B cell (primary cell): ENCODE measurements at regions of chr1 and their contacts with region 1.

Region 1: GRCh38 chr1:180981596-180982387 is 40.9 kb downstream of the STX6 start:
- DNase-seq: peak; percentile 33
- ATAC-seq: peak; percentile 90
- H3K4me3 ChIP-seq: no peak overlapping the region
- H3K4me3 Mint-ChIP-seq: peak overlapping the region; percentile 18
- H3K27ac ChIP-seq: peak overlapping the region; percentile 4 to 61
- H3K27ac Mint-ChIP-seq: peak overlapping the region; percentile 76
- H3K4me1 ChIP-seq: peaks cover 10 to 11% of the 10 kb centered on the region in 2 donors
- H3K4me1 Mint-ChIP-seq: peaks cover 20% of the 10 kb centered on the region
- H3K27me3 ChIP-seq: no peaks in the 10 kb centered on the region
- H3K27me3 Mint-ChIP-seq: no peaks in the 10 kb centered on the region
- CTCF ChIP-seq: no peak

Region 2: DNA sequence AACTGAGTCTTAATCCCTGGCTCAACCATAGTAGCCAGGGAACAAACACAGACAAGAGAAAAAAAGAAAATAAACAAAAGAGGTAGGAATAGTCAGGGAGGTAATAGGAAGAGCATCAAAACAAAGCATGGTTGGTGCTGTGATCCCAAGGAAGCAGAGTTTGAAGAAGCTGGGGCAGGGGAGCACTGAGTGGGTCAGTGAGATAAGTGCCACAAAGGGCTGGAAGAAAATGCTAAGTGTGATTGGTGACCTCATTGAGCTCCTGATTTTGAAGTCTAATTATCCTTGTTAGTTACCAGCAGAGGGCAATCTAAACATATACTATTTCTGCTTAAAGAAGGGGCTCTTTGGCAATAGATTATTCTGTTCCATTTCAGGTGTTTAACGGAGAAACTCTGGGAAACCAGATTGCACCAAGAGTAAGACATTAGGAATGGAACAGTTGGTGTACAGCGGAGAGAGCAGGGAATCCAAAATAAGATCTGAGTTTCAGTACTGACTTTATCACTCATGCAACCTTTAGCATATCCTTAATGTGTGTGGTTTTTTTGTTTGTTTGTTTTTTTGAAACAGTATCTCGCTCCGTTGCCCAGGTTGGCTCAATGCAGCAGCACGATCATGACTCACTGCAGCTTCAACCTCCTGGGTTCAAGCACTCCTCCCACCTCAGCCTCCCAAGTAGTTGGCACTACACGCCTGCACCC is 99.8 kb before region 1 on chr1:
- CTCF ChIA-PET with region 1: no interaction called
- POLR2A ChIA-PET with region 1: no interaction called
- intact Hi-C with region 1: loop called (anchors 10 kb)
- DNase-seq: peak; percentile 37
- ATAC-seq: no peak
- H3K4me3 ChIP-seq: no peak overlapping the region
- H3K4me3 Mint-ChIP-seq: no peak overlapping the region
- H3K27ac ChIP-seq: no peak overlapping the region
- H3K27ac Mint-ChIP-seq: no peak overlapping the region
- H3K4me1 ChIP-seq: no peaks in the 10 kb centered on the region
- H3K4me1 Mint-ChIP-seq: no peaks in the 10 kb centered on the region
- H3K27me3 ChIP-seq: no peaks in the 10 kb centered on the region
- H3K27me3 Mint-ChIP-seq: no peaks in the 10 kb centered on the region
- CTCF ChIP-seq: peak; percentile 47